ENCODE measurements at regions of chr20 and their contacts with region 1.

Region 1: GRCh38 chr20:42281801-42282200 is 663.6 kb upstream of the CHD6 start:
- DNase-seq: no peak
- ATAC-seq: no peak
- H3K4me3 ChIP-seq: no peak overlapping the region
- H3K27ac ChIP-seq: no peak overlapping the region
- H3K4me1 ChIP-seq: no peaks in the 10 kb centered on the region
- H3K27me3 ChIP-seq: no peaks in the 10 kb centered on the region
- CTCF ChIP-seq: no peak

Region 2: GRCh38 chr20:42267802-42268384 is 13.9 kb before region 1 on chr20:
- intact Hi-C with region 1: loop called in 1 of 10 experiments (anchors 1 kb)
- DNase-seq: no peak
- ATAC-seq: no peak
- H3K4me3 ChIP-seq: no peak overlapping the region
- H3K27ac ChIP-seq: no peak overlapping the region
- H3K4me1 ChIP-seq: no peaks in the 10 kb centered on the region
- H3K27me3 ChIP-seq: peaks cover 0 to 3% (median 0%) of the 10 kb centered on the region in 7 donors
- CTCF ChIP-seq: no peak

Measured in heart right ventricle (tissue), 16 donors.